ENCODE measurements at regions of chr18 and their contacts with region 1.

Region 1: GRCh38 chr18:9334329-9334972 is at the start of gene TWSG1:
- DNase-seq: peak; percentile 82 to 94 (median 89)
- ATAC-seq: peak; percentile 90 to 93 (median 92)
- H3K4me3 ChIP-seq: peak within 1 kb of the TSS; percentile 70 to 90
- H3K4me3 Mint-ChIP-seq: peak within 1 kb of the TSS; percentile 87 to 92 (median 90)
- H3K27ac ChIP-seq: peak within 1 kb of the TSS; percentile 54
- H3K27ac Mint-ChIP-seq: peak within 1 kb of the TSS; percentile 42 to 60
- H3K4me1 ChIP-seq: peaks cover 4 to 14% of the 10 kb centered on the region in 2 experiments
- H3K4me1 Mint-ChIP-seq: peaks cover 16 to 28% (median 24%) of the 10 kb centered on the region in 3 donors
- H3K27me3 ChIP-seq: no peaks in the 10 kb centered on the region
- H3K27me3 Mint-ChIP-seq: no peaks in the 10 kb centered on the region
- total RNA-seq, gene TWSG1: 1.8 to 6.2 (median 4.4) TPM

Region 2: GRCh38 chr18:8754995-8755955 is 579.2 kb before region 1 on chr18:
- CTCF ChIA-PET with region 1: no interaction called
- POLR2A ChIA-PET with region 1: no interaction called
- DNase-seq: peak; percentile 14 to 78 (median 61)
- ATAC-seq: peak; percentile 95 to 100 (median 100)
- H3K4me3 ChIP-seq: peak overlapping the region; percentile 9 to 40
- H3K4me3 Mint-ChIP-seq: peak overlapping the region; percentile 61 to 67 (median 65)
- H3K27ac ChIP-seq: peak overlapping the region; percentile 31
- H3K27ac Mint-ChIP-seq: peak overlapping the region; percentile 56 to 69
- H3K4me1 ChIP-seq: peaks cover 25% of the 10 kb centered on the region in 2 experiments
- H3K4me1 Mint-ChIP-seq: peaks cover 34 to 44% (median 41%) of the 10 kb centered on the region in 3 donors
- H3K27me3 ChIP-seq: peaks cover 0 to 7% of the 10 kb centered on the region in 2 experiments
- H3K27me3 Mint-ChIP-seq: peaks cover 2 to 12% of the 10 kb centered on the region in 2 donors

Region 3: GRCh38 chr18:9102508-9103375 is 231.7 kb before region 1 on chr18 and contains the start of gene NDUFV2:
- CTCF ChIA-PET with region 1: interaction called, 4 to 11 read pairs
- POLR2A ChIA-PET with region 1: interaction called in 1 of 2 experiments, 5 read pairs
- DNase-seq: peak; percentile 93 to 99 (median 97)
- ATAC-seq: peak; percentile 86 to 96 (median 89)
- H3K4me3 ChIP-seq: peak within 1 kb of the TSS; percentile 76 to 91
- H3K4me3 Mint-ChIP-seq: peak within 1 kb of the TSS; percentile 91 to 92 (median 91)
- H3K27ac ChIP-seq: peak within 1 kb of the TSS; percentile 80
- H3K27ac Mint-ChIP-seq: peak within 1 kb of the TSS; percentile 93 to 95
- H3K4me1 ChIP-seq: peaks cover 21 to 36% of the 10 kb centered on the region in 2 experiments
- H3K4me1 Mint-ChIP-seq: peaks cover 55 to 65% (median 60%) of the 10 kb centered on the region in 3 donors
- H3K27me3 ChIP-seq: no peaks in the 10 kb centered on the region
- H3K27me3 Mint-ChIP-seq: no peaks in the 10 kb centered on the region
- total RNA-seq, gene NDUFV2: 148 to 201 (median 156) TPM

Measured in T-cell (primary cell).